Activated CD4-positive, alpha-beta T cell treated with anti-CD3 and anti-CD28 coated beads, Interleukin-2, amount 10 ng/mL, durations not matched to agents 7 days and 5 days (primary cell): ENCODE measurements at regions of chr1 and their contacts with region 1.

Region 1: DNA sequence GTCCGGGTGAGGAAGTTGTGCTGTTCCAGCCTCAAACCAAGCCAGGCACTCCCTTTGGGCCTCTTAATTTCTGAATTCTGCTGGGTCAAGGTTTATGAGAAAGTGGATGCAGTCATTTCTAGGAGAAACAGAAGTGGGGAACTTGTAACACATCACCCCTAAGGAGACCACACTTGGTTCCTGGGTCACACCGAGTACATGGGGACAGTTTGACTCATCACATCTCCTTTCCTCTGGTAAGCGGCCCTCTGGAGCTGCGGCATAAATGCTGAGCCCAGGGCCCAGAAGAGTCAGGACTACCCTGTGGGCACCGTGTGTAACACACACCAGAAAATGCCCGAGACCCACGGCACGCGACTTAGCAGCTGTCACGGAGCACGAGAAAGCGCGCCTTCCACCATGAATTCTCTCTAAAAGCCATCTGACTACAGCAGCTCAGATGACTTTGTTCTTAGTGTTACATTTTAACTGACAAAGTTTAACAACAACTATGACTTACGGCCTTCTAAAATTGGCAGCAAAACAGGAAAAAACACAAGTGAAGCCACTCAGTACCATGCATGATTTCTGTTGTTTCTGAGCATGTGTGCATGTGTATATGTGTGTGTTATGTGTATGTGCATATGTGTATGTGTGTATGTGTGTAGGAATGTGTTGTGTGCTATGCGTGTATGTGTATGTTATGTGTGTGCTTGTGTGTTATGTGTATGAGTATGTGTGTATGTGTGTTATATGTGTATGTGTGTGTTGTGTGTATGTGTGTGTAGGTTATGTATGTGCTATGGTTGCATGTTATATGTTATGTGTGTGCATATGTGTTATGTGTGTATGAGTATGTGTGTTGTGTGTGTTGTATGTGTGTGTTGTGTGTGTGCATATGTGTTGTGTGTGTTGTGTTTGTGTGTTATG is 50.8 kb downstream of the TOMM20 start:
- DNase-seq: peak; percentile 28
- H3K4me3 Mint-ChIP-seq: no peak overlapping the region
- H3K27ac Mint-ChIP-seq: peak overlapping the region; percentile 52
- H3K4me1 Mint-ChIP-seq: peaks cover 39% of the 10 kb centered on the region
- H3K27me3 Mint-ChIP-seq: no peaks in the 10 kb centered on the region

Region 2: DNA sequence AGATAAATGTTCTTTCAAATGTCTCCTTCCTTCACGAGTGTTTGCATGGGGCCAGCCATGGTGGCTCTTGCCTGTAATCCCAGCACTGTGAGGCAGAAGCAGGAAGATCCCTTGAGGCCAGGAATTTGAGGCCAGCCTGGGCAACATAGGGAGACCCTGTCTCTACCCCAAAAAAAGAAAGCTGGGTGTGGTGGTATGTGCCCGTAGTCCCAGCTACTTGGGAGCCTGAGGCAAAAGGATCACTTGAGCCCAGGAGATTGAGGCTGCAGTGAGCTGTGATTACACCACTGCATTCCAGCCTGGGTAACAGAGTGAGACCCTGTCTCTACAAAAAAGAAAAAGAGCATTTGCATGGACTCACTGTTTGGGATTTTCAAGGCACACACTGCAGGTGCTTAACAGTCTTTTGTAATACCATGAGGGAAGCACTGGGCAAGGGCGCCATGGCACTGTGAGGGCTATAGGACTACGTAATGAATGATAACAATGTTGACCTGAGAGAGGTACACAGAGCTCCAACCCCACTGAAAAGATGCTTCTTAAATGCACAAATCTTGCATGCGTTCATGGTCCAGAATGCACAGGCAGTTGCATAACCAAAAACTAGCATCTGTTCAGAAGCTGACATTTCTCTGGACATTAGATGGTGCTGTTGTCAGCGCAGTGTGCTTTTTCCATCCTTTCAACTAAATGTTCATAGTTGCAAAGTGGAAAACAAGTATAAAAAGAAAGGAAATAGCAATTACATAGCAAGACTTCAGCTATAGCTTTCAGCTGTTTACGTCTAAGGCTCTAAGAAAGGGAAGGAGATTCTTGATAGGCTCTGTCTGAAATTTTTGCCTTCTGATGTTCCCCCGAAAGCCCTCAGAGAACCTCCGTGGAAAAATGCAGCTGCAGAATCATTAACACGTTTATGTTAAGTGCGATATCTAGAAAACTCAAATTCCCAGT is 591.1 kb before region 1 on chr1:
- CTCF ChIA-PET with region 1: interaction called, 11 read pairs
- POLR2A ChIA-PET with region 1: no interaction called
- DNase-seq: peak; percentile 46
- H3K4me3 Mint-ChIP-seq: no peak overlapping the region
- H3K27ac Mint-ChIP-seq: peak overlapping the region; percentile 76
- H3K4me1 Mint-ChIP-seq: peaks cover 42% of the 10 kb centered on the region
- H3K27me3 Mint-ChIP-seq: peaks cover 18% of the 10 kb centered on the region

Region 3: GRCh38 chr1:234499119-234499942 is 578.5 kb before region 1 on chr1:
- CTCF ChIA-PET with region 1: interaction called, 13 read pairs
- POLR2A ChIA-PET with region 1: no interaction called
- DNase-seq: peak; percentile 85
- H3K4me3 Mint-ChIP-seq: no peak overlapping the region
- H3K27ac Mint-ChIP-seq: peak overlapping the region; percentile 87
- H3K4me1 Mint-ChIP-seq: peaks cover 57% of the 10 kb centered on the region
- H3K27me3 Mint-ChIP-seq: no peaks in the 10 kb centered on the region

Region 4: GRCh38 chr1:234599617-234600417 is 478.0 kb before region 1 on chr1:
- CTCF ChIA-PET with region 1: interaction called, 3 read pairs
- POLR2A ChIA-PET with region 1: interaction called, 13 read pairs
- DNase-seq: peak; percentile 67
- H3K4me3 Mint-ChIP-seq: peak overlapping the region; percentile 82
- H3K27ac Mint-ChIP-seq: peak overlapping the region; percentile 96
- H3K4me1 Mint-ChIP-seq: peaks cover 61% of the 10 kb centered on the region
- H3K27me3 Mint-ChIP-seq: no peaks in the 10 kb centered on the region

Region 5: DNA sequence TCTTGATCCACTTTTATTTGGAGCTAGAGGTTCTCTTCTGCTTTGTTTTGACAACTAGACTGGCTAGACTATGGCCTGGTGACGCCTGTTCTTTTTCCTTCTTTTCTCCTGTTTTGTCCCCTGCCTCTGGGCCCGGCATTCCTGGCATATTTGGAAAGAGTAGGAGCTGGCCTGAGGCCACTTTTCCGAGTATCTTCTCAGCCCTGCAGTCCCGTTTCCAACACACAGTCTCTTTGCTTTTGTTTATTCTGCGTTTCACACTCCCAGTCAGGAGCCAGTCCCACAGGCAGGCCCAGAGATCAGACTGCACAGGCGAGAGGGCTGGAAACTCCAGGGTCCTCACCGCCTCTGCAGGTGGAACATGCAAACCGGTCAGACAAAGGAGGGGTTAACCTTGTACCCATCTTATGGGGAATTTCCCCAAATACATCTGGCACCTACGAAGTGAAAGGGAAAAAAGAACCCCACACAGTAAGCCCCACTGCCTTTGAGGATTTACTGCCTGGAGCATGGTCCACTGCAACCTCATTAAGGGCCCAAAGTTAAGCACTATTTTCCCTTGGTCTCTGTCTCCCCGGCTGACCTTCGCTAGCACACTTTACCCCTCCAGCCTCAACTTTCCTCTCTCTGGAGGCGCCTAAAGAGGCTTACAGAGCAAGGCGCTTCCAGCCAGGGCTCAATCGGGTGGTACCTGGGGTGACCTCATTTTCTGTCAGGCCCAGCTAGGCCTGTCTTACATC is 90.2 kb before region 1 on chr1:
- CTCF ChIA-PET with region 1: no interaction called
- POLR2A ChIA-PET with region 1: no interaction called
- DNase-seq: no peak
- H3K4me3 Mint-ChIP-seq: no peak overlapping the region
- H3K27ac Mint-ChIP-seq: peak overlapping the region; percentile 84
- H3K4me1 Mint-ChIP-seq: peaks cover 64% of the 10 kb centered on the region
- H3K27me3 Mint-ChIP-seq: no peaks in the 10 kb centered on the region